Calu3 (cell line): ENCODE measurements at regions of chr15 and their contacts with region 1.

Region 1: DNA sequence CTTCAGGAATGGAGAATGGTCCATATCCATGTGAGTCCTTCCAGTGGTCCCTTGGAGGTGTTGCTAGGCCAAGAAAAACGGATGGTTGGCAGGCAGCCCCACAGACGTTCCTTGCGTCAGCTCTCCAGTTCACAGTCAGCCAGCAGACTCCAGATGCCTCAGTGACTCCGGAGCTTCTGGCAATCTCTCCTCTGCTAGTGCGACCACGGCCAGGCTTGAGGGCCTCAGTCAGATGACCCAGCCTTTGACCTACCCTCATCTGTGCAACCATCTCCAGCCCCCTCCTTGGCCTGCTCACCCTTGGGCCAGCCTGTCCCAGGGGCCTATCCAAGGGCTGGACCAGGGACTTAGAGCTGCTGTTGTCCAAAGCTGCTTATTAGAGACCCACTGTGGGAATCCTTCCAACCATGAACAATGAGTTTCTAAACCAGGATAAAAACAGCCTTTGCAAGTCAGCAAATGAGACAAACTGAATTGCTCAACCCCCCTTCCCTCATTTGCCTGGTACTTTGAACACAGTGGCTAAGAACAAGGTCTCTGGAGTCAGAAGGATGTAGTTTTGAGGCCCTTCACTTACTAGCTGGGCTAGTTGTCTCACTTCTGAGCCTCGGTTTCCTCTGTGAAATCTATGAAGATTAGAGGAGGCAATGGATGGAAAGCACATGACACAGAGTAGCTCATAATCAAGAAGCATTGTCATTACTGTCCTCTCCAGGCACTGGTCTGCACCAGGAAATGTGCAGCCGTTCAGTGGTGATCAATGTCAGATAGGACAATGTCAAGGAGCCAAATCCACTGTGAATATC is 44.8 kb downstream of the ANP32A start:
- DNase-seq: no peak
- H3K4me3 Mint-ChIP-seq: no peak overlapping the region
- H3K27ac Mint-ChIP-seq: no peak overlapping the region
- H3K4me1 Mint-ChIP-seq: no peaks in the 10 kb centered on the region
- H3K27me3 Mint-ChIP-seq: peaks cover 18% of the 10 kb centered on the region
- CTCF ChIP-seq: no peak

Region 2: GRCh38 chr15:68503791-68504680 is 271.8 kb before region 1 on chr15:
- CTCF ChIA-PET with region 1: no interaction called
- intact Hi-C with region 1: no loop called
- DNase-seq: no peak
- H3K4me3 Mint-ChIP-seq: no peak overlapping the region
- H3K27ac Mint-ChIP-seq: no peak overlapping the region
- H3K4me1 Mint-ChIP-seq: no peaks in the 10 kb centered on the region
- H3K27me3 Mint-ChIP-seq: peaks cover 89% of the 10 kb centered on the region
- CTCF ChIP-seq: no peak

Region 3: GRCh38 chr15:68739390-68740080 is 36.3 kb before region 1 on chr15:
- CTCF ChIA-PET with region 1: no interaction called
- intact Hi-C with region 1: no loop called
- DNase-seq: no peak
- H3K4me3 Mint-ChIP-seq: no peak overlapping the region
- H3K27ac Mint-ChIP-seq: no peak overlapping the region
- H3K4me1 Mint-ChIP-seq: no peaks in the 10 kb centered on the region
- H3K27me3 Mint-ChIP-seq: peaks cover 38% of the 10 kb centered on the region
- CTCF ChIP-seq: no peak

Region 4: GRCh38 chr15:68808091-68808490 is 32.2 kb after region 1 on chr15:
- CTCF ChIA-PET with region 1: no interaction called
- intact Hi-C with region 1: no loop called
- DNase-seq: no peak
- H3K4me3 Mint-ChIP-seq: no peak overlapping the region
- H3K27ac Mint-ChIP-seq: peak overlapping the region; percentile 41
- H3K4me1 Mint-ChIP-seq: peaks cover 67% of the 10 kb centered on the region
- H3K27me3 Mint-ChIP-seq: no peaks in the 10 kb centered on the region
- CTCF ChIP-seq: no peak

Region 5: DNA sequence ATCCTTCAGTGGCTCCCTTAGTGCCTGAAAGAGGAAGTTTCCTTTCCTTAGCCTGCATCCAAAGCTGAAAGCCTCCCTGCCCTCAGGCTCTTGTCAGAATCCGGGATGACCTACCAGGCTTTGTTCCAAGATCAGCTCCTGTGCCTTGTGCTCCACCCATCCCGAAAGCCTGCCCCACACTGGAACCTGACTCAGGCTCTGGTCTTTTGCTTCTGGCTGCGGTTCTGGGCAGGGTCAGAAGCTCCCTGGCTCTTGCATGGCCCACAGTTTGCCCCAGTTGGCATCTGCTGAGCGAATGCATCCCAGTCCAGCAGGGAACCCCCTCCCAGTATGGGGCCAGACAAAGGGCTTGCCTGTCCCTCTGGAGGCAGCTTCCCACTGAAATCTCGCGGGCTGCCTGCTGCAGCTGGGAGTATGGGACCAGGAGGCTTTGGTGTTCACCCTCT is 612.4 kb after region 1 on chr15:
- CTCF ChIA-PET with region 1: interaction called, 13 read pairs
- intact Hi-C with region 1: no loop called
- DNase-seq: no peak
- H3K4me3 Mint-ChIP-seq: no peak overlapping the region
- H3K27ac Mint-ChIP-seq: no peak overlapping the region
- H3K4me1 Mint-ChIP-seq: peaks cover 18% of the 10 kb centered on the region
- H3K27me3 Mint-ChIP-seq: no peaks in the 10 kb centered on the region
- CTCF ChIP-seq: no peak